Psoas muscle (tissue), 8 donors: ENCODE measurements at regions of chr17 and their contacts with region 1.

Region 1: GRCh38 chr17:63232565-63233310 is 213.4 kb downstream of the CYB561 start:
- DNase-seq: no peak
- ATAC-seq: no peak
- H3K4me3 ChIP-seq: no peak overlapping the region
- H3K27ac ChIP-seq: no peak overlapping the region
- H3K4me1 ChIP-seq: no peaks in the 10 kb centered on the region
- H3K27me3 ChIP-seq: no peaks in the 10 kb centered on the region
- CTCF ChIP-seq: no peak

Region 2: GRCh38 chr17:63191610-63192009 is 41.1 kb before region 1 on chr17:
- intact Hi-C with region 1: loop called in 1 of 2 experiments (anchors 2 kb)
- DNase-seq: peak; percentile 20 to 55
- ATAC-seq: no peak
- H3K4me3 ChIP-seq: no peak overlapping the region
- H3K27ac ChIP-seq: no peak overlapping the region
- H3K4me1 ChIP-seq: no peaks in the 10 kb centered on the region
- H3K27me3 ChIP-seq: no peaks in the 10 kb centered on the region
- CTCF ChIP-seq: no peak

Region 3: DNA sequence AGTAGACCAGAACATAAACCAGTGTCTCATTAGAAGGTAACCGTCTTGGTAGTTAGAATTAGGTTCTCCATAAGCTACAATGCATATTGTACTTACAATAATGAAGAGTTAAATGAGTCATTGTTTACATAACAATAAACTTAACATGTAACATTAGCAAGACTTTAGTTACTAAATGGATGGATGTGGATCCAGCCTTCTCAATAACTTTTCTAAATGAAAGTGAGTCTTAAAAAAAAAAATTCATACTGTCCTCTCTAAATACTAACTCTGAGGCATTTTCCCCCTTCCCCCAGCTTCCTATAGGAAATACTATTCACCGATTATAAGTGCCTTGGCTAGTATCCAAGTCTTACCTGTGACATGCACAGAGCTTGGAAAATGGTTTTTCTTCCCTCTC is 58.0 kb after region 1 on chr17:
- intact Hi-C with region 1: no loop called
- DNase-seq: no peak
- ATAC-seq: no peak
- H3K4me3 ChIP-seq: no peak overlapping the region
- H3K27ac ChIP-seq: no peak overlapping the region
- H3K4me1 ChIP-seq: no peaks in the 10 kb centered on the region
- H3K27me3 ChIP-seq: no peaks in the 10 kb centered on the region
- CTCF ChIP-seq: no peak

Region 4: GRCh38 chr17:63316100-63316499 is 83.4 kb after region 1 on chr17:
- intact Hi-C with region 1: no loop called
- DNase-seq: no peak
- ATAC-seq: no peak
- H3K4me3 ChIP-seq: no peak overlapping the region
- H3K27ac ChIP-seq: no peak overlapping the region
- H3K4me1 ChIP-seq: no peaks in the 10 kb centered on the region
- H3K27me3 ChIP-seq: no peaks in the 10 kb centered on the region
- CTCF ChIP-seq: no peak